Activated naive CD4-positive, alpha-beta T cell treated with anti-CD3 and anti-CD28 coated beads for 36 hours (primary cell): ENCODE measurements at regions of chr5 and their contacts with region 1.

Region 1: DNA sequence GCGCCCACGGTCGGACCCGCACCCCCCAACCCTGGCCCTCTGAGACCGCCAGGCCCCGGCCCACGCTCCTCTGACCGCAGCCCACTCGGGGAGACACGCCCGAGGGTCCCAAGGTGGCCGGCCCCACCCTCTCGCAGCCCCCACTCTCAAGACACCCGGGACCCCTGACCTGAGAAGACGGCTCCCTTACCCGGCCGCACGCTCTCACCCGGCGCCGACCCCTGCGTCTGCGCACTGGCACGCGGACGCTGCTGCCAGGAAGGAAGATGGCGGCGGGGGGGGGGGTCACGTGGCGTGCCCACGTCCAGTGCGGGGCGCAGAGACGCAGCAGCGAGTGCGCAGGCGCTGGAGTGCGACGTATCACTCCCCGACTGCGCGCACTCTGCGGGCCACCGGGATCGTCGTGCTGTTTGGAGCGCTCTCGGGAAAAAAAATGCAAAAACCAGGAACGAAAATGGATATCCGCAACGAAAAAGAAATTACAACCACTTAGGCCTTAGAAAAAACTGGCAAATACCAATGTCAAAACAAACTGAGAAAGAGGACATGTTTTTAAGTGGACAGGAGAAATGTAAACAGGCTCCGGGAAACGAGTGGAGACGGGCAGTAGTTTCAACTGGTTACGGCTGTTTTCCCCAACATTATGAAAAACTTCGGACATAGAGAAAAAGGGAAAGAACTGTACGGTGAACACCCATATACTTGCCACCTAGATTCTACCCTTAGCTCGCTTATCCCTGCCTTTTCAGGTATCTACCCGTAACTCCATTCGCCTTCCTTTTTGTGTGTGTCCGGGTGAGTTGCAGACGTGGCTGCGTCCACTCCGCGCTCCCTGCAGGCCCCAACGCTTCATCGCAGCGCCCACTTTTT is at the start of gene MRPL36:
- DNase-seq: peak; percentile 94
- H3K4me3 Mint-ChIP-seq: peak within 1 kb of the TSS; percentile 99
- H3K27ac Mint-ChIP-seq: peak within 1 kb of the TSS; percentile 98
- H3K4me1 Mint-ChIP-seq: peaks cover 55% of the 10 kb centered on the region
- H3K27me3 Mint-ChIP-seq: no peaks in the 10 kb centered on the region
- total RNA-seq, gene MRPL36: 60.7 to 63.4 TPM

Region 2: DNA sequence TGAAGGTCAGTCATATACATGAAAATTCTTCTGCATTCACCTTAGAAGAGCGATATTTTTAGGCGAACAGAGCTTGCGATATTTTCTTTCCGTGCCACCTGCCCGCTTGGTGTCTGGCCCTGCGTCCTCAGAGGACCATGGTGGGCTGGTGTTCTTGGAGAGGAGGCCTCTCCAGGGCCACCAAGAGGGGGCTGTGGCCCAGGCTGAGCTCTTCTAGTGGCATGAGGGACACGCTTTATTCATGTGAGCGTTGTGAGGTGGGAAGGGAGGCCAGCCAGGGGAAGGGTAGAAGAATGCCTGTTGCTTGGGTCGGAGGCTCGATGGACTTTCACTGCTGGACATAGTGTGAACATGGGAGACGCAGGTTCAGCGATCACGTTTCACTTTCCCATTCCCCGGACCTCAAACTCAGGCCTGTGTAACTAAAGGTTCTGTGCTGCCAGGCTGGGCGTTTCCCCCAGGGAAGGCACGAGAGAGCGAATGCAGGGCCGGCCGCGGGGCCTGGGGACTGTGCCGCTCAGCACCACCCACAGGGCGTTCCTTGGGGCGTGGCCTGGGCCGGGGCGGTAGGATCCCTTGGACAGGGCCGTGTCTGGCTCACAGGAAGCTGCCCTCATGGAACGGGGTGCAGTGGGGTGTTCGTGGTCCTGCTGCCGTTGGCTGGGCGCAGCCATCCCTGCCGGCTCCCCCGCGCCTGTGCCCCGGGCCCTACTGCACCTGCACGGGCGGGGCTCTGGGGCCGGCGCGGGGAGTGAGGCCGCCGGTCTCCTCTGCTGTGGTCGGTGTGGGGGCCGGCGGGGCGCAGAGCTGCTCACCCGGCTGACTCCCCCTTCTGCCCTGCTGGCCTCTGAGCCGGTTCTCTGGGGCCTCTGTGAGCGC is 414.2 kb before region 1 on chr5:
- CTCF ChIA-PET with region 1: no interaction called
- intact Hi-C with region 1: loop called (anchors 5 kb)
- DNase-seq: peak; percentile 85
- H3K4me3 Mint-ChIP-seq: peak overlapping the region; percentile 90
- H3K27ac Mint-ChIP-seq: peak overlapping the region; percentile 89
- H3K4me1 Mint-ChIP-seq: peaks cover 15% of the 10 kb centered on the region
- H3K27me3 Mint-ChIP-seq: no peaks in the 10 kb centered on the region

Region 3: DNA sequence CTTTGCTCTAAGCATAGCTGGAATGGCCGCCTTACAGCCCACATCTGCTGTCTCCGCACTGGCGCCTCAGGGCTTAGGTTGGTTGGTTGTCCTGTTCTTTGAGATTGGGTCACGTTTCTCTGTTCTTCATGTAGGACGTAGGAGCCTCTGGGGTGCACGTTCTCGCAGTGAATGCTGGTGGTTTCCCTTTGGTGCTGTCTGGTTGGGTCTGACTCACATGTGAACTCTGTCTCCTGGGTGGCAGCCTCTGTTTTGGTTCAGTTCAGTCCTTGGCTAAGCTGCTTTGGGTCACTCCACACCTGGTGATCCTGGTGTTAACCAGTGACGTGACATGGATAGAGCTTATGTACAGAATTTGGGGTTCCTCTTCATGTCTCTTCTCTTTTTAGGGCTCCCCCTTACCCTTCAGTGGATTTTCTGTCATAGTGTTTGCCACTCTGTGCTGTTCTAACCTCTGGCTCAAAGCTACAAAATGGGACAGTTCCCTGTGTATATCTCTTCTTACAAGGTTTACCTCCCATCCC is 263.5 kb before region 1 on chr5:
- CTCF ChIA-PET with region 1: no interaction called
- intact Hi-C with region 1: loop called (anchors 10 kb)
- DNase-seq: peak; percentile 89
- H3K4me3 Mint-ChIP-seq: peak overlapping the region; percentile 76
- H3K27ac Mint-ChIP-seq: peak overlapping the region; percentile 68
- H3K4me1 Mint-ChIP-seq: peaks cover 16% of the 10 kb centered on the region
- H3K27me3 Mint-ChIP-seq: no peaks in the 10 kb centered on the region

Region 4: GRCh38 chr5:1666812-1667588 is 132.8 kb before region 1 on chr5:
- CTCF ChIA-PET with region 1: interaction called, 3 read pairs
- intact Hi-C with region 1: loop called (anchors 2 kb)
- DNase-seq: peak; percentile 64
- H3K4me3 Mint-ChIP-seq: peak overlapping the region; percentile 33
- H3K27ac Mint-ChIP-seq: no peak overlapping the region
- H3K4me1 Mint-ChIP-seq: peaks cover 18% of the 10 kb centered on the region
- H3K27me3 Mint-ChIP-seq: peaks cover 60% of the 10 kb centered on the region

Region 5: GRCh38 chr5:1737790-1738405 is 61.9 kb before region 1 on chr5:
- CTCF ChIA-PET with region 1: interaction called, 4 read pairs
- intact Hi-C with region 1: loop called (anchors 2 kb)
- DNase-seq: peak; percentile 68
- H3K4me3 Mint-ChIP-seq: no peak overlapping the region
- H3K27ac Mint-ChIP-seq: no peak overlapping the region
- H3K4me1 Mint-ChIP-seq: no peaks in the 10 kb centered on the region
- H3K27me3 Mint-ChIP-seq: peaks cover 17% of the 10 kb centered on the region